Activated T-helper 2 cell treated with anti-CD3 and anti-CD28 coated beads, Interferon-gamma antibody, Interleukin-2, Interleukin-4, amounts not matched to agents 10 μg/mL and 5 μg/mL and 100 μg/mL, durations not matched to agents 14 hours and 24 hours and 36 hours (primary cell): ENCODE measurements at regions of chrX and their contacts with region 1.

Region 1: GRCh38 chrX:7147978-7148824 is at the start of gene PUDP:
- DNase-seq: peak; percentile 79
- H3K4me3 Mint-ChIP-seq: peak within 1 kb of the TSS; percentile 82
- H3K27ac Mint-ChIP-seq: peak within 1 kb of the TSS; percentile 77
- H3K4me1 Mint-ChIP-seq: peaks cover 13% of the 10 kb centered on the region
- H3K27me3 Mint-ChIP-seq: no peaks in the 10 kb centered on the region
- total RNA-seq, gene PUDP: 16.3 and 16.7 TPM in 2 replicates

Region 2: GRCh38 chrX:7059214-7059838 is 88.9 kb before region 1 on chrX:
- intact Hi-C with region 1: loop called (anchors 1 kb)
- DNase-seq: no peak
- H3K4me3 Mint-ChIP-seq: peak overlapping the region; percentile 5
- H3K27ac Mint-ChIP-seq: peak overlapping the region; percentile 70
- H3K4me1 Mint-ChIP-seq: peaks cover 21% of the 10 kb centered on the region
- H3K27me3 Mint-ChIP-seq: no peaks in the 10 kb centered on the region

Region 3: DNA sequence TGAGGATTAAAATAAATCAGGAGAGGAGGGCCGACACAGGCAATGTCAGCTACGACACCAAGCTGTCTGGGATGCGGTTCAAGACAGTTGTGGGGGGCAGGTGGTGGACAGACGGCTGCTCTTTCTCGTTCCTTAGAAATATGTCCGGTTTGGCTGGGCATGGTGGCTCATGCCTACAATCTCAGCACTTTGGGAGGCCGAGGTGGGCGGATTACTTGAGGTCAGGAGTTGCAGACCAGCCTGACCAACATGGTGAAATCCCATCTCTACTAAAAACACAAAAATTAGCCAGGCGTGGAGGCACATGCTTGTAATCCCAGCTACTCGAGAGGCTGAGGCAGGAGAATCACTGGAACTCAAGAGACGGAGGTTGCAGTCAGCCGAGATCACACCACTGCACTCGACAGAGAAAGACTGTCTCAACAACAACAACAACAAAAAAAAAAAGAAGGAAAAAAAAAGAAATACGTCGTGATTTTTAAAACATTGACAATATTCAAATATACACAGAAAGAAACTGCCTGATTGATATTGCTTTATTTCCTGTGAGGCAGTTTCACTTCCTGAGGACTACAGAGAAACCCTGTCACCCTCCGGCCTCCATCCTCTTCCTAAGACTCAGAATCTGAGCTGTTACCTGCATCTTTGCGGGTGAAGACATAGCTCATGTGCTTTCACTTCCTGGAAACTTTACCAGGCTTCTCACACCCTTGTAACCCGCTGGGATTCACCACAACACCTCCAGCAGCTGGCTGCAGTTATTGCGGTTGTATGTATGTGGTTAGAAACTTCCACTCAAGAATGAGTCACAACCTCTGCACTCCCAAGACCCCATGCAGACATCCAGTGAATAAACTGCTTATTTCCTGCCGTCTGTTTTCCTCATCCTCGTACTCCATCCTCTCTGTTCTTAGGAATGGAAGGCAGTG is 64.5 kb before region 1 on chrX:
- intact Hi-C with region 1: loop called (anchors 2 kb)
- DNase-seq: peak; percentile 66
- H3K4me3 Mint-ChIP-seq: peak overlapping the region; percentile 21
- H3K27ac Mint-ChIP-seq: peak overlapping the region; percentile 4
- H3K4me1 Mint-ChIP-seq: peaks cover 42% of the 10 kb centered on the region
- H3K27me3 Mint-ChIP-seq: no peaks in the 10 kb centered on the region

Region 4: GRCh38 chrX:7110821-7111276 is 37.4 kb before region 1 on chrX:
- intact Hi-C with region 1: no loop called
- DNase-seq: no peak
- H3K4me3 Mint-ChIP-seq: no peak overlapping the region
- H3K27ac Mint-ChIP-seq: peak overlapping the region; percentile 36
- H3K4me1 Mint-ChIP-seq: peaks cover 24% of the 10 kb centered on the region
- H3K27me3 Mint-ChIP-seq: no peaks in the 10 kb centered on the region